ENCODE measurements at regions of chr20 and their contacts with region 1.

Region 1: GRCh38 chr20:39264506-39265172 is 302.5 kb downstream of the DHX35 start:
- DNase-seq: peak; percentile 71
- H3K4me3 ChIP-seq: no peak overlapping the region
- H3K27ac ChIP-seq: no peak overlapping the region
- H3K4me1 ChIP-seq: no peaks in the 10 kb centered on the region
- H3K27me3 ChIP-seq: no peaks in the 10 kb centered on the region
- CTCF ChIP-seq: peak; percentile 94

Region 2: GRCh38 chr20:39225536-39225935 is 39.1 kb before region 1 on chr20:
- CTCF ChIA-PET with region 1: no interaction called
- POLR2A ChIA-PET with region 1: no interaction called
- intact Hi-C with region 1: no loop called
- DNase-seq: no peak
- H3K4me3 ChIP-seq: no peak overlapping the region
- H3K27ac ChIP-seq: no peak overlapping the region
- H3K4me1 ChIP-seq: no peaks in the 10 kb centered on the region
- H3K27me3 ChIP-seq: peaks cover 29% of the 10 kb centered on the region
- CTCF ChIP-seq: no peak

Region 3: DNA sequence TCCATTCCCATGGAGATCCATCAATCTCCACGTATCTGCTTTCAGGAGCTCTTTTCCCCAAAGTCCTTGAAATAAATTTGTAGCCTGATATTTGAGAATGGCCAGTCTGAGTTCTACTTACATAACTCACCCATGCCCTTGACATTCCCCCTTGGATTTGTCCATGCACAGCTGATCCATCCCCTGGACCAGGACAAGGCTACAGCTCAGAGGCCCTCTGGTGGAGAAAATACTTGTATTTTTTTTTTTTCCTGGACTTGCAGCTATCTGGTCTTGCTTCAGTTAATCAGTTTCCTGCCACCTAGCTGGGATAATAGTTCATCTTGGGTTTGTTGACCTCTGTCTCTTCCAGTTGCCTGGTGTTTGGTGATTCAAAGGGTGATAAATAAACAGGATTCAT is 165.1 kb after region 1 on chr20:
- CTCF ChIA-PET with region 1: no interaction called
- POLR2A ChIA-PET with region 1: no interaction called
- intact Hi-C with region 1: loop called (anchors 1 kb)
- DNase-seq: peak; percentile 11
- H3K4me3 ChIP-seq: no peak overlapping the region
- H3K27ac ChIP-seq: no peak overlapping the region
- H3K4me1 ChIP-seq: no peaks in the 10 kb centered on the region
- H3K27me3 ChIP-seq: no peaks in the 10 kb centered on the region
- CTCF ChIP-seq: peak; percentile 49

Region 4: DNA sequence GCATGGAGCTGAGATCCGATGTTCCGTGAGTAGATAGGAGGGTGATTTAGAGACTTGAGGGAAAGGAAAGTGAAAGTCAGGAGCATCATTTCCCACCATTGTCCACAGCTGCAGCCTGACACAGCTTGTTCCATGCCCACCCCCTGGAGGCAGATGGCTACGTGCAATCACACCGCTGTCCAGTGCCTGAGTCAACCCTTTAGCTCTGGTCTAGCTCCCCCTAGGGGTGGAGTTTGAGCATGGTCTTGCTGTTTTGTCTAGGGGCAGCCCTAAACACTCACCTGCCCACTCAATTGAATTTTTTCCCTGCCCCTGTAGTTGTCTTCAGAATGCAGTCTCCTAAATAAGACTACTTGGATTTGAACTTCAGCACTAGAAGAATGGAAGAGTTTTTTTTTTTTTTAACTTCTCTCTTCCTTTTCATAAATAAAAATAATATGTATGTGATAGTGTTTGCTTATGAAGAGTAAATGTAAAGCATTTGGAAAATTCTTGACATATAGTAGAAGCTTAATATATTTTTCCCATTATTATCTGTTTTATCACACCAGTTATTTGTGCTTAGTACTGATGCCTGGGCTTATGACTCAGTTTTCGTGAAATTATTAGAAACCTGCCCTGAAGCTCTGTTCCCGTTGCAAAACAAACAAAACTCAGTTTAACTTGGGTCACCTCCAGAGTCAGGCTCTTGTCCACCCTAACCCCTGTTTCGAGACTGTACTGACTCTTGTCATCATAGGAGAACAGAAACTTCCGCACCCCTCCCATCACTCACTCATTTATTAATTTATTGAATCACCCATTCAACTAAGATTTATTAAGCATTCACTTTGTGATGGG is 609.6 kb after region 1 on chr20:
- CTCF ChIA-PET with region 1: interaction called, 3 read pairs
- POLR2A ChIA-PET with region 1: no interaction called
- intact Hi-C with region 1: loop called (anchors 5 kb)
- DNase-seq: peak; percentile 85
- H3K4me3 ChIP-seq: no peak overlapping the region
- H3K27ac ChIP-seq: no peak overlapping the region
- H3K4me1 ChIP-seq: no peaks in the 10 kb centered on the region
- H3K27me3 ChIP-seq: no peaks in the 10 kb centered on the region
- CTCF ChIP-seq: peak; percentile 86

Region 5: DNA sequence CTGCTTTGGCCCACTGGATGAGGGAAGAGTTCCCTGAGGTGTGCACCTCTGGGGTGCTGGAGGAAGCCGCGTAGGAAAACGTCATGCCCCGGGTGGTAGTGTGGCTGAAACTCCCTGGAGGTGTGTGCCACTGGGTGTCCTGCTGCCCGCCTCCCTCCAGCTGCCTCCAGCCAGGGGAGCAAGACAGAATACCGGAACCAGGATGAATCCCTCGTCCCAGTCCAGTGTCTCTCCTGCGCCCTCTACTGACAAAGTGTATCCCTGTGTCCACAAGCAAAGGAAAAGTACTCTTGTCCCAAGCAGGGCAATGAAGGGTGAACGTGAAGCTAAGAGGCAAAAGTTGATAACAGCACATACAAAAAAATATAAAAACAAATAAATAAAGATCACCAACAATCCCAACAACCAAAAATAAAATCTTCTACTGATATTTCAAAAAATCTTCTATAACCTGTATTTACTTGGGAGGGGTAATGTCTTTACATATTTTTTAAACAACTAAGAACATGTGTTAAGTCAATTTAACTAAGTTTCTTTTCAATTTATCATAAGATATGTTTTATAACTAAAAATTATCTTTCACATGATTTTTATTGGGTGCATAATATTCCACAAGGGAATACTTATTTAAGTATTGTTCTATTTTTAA is 986.8 kb after region 1 on chr20:
- CTCF ChIA-PET with region 1: no interaction called
- POLR2A ChIA-PET with region 1: no interaction called
- intact Hi-C with region 1: loop called (anchors 10 kb)
- DNase-seq: peak; percentile 78
- H3K4me3 ChIP-seq: no peak overlapping the region
- H3K27ac ChIP-seq: no peak overlapping the region
- H3K4me1 ChIP-seq: peaks cover 15% of the 10 kb centered on the region
- H3K27me3 ChIP-seq: no peaks in the 10 kb centered on the region
- CTCF ChIP-seq: peak; percentile 79

Region 6: DNA sequence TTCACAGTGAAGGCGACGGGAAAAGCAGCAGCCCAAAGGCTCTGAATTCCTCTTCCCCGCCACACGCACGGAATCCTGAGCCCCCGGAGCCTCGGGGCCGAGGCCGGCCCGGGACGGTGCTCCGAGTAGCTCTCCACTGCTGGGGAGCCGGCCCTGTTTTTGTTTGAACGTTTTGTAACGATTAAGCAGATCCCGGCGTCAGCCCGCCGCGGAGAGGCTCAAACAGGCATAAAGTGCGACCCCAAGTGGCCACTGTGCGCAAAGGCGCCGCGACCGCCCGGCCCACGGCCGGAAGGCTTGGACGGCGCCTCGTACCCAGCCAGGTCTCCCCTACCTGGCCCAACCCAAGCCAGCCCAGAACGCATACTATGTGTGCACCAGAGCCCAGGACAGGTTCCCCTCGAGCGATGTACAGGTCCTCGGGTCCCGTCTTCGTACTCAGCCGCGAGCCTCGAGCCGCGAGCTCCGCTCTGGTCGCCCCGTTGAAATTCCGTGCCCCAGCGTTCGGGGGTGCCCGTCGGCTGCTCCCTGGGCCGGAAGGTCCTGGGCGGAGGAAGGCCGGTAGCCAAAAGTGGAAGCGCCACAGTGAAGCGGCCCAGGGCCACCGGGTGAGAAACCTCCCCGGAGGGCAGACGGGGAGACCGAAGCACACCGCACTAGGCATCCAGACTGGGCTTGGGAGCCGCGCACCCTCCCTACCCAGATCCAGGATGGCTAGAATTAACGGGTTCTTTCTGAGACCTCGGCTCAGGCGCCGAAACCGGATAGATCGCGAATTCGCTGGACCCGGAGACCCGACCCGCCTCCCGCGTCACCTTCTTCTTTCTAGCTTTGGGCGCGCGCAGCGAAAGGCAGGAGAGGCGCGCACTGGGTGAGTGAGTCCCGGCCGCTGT is 1425.5 kb after region 1 on chr20:
- CTCF ChIA-PET with region 1: no interaction called
- POLR2A ChIA-PET with region 1: no interaction called
- intact Hi-C with region 1: loop called (anchors 10 kb)
- DNase-seq: peak; percentile 92
- H3K4me3 ChIP-seq: peak overlapping the region; percentile 78
- H3K27ac ChIP-seq: peak overlapping the region; percentile 84
- H3K4me1 ChIP-seq: peaks cover 5% of the 10 kb centered on the region
- H3K27me3 ChIP-seq: peaks cover 5% of the 10 kb centered on the region
- CTCF ChIP-seq: peak; percentile 96

Region 7: GRCh38 chr20:40945754-40946450 is 1681.3 kb after region 1 on chr20:
- CTCF ChIA-PET with region 1: no interaction called
- POLR2A ChIA-PET with region 1: no interaction called
- intact Hi-C with region 1: loop called (anchors 5 kb)
- DNase-seq: peak; percentile 77
- H3K4me3 ChIP-seq: no peak overlapping the region
- H3K27ac ChIP-seq: no peak overlapping the region
- H3K4me1 ChIP-seq: no peaks in the 10 kb centered on the region
- H3K27me3 ChIP-seq: no peaks in the 10 kb centered on the region
- CTCF ChIP-seq: peak; percentile 77

Measured in A673 (cell line).